MCF 10A (cell line): ENCODE measurements at regions of chr9 and their contacts with region 1.

Region 1: DNA sequence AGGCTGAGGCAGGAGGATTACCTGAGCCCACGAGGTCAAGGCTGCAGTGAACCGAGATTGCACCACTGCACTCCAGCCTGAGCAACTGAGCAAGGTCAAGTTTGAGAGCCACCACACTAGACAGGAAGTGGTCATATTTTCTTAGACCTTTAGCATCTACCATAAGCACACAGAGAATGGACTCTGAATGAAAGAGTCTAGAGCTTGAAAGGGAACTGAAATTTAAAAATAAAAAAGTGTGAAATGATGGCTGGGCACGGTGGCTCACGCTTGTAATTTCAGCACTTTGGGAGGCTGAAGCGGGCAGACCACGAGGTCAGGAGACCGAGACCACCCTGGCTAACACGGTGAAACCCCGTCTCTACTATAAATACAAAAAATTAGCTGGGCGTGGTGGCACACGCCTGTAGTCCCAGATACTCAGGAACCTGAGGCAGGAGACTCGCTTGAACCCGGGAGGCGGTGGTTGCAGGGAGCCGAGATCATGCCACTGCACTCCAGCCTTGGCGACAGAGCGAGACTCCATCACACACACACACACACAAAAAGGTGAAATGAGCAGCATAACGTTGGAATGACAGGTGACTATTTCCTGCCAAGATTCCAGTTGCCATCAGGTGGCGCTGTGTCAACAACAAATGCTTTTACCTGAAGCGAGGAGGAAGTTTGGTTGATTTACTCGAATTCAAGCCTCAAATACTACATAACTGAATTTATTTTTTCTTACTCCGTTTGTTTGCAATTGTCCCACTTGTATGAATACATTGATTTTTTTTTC is 21.3 kb upstream of the AK3 start:
- DNase-seq: peak; percentile 85
- H3K4me3 Mint-ChIP-seq: no peak overlapping the region
- H3K27ac Mint-ChIP-seq: no peak overlapping the region
- H3K4me1 Mint-ChIP-seq: no peaks in the 10 kb centered on the region
- H3K27me3 Mint-ChIP-seq: peaks cover 12% of the 10 kb centered on the region
- CTCF ChIP-seq: peak; percentile 76

Region 2: DNA sequence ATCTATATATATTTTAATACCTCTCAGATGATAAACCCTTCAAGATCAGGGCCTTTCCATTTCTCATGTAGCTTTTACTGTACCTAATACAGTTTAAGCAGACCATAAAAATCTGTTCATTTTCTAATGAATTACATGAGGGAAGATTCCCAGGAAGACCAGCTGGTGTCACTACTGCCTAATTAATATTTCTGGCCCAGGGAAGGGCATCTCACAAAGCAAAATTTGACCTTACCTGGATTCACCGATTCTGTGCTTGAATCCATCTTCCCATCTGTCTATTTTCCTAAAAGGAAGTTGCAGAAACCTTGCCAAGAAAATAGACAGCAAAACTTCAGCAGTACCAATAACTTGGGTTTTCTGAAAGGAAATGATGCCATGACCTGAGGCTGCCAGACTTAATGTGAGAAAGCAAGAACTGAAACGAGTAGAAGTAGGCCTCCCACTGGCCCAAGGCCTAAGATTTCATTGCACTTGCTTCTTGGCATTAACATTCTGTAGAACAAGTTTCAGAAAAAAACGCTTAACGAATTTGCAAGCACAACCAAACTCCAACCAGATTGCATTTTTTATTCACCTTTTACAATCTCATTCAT is 379.5 kb before region 1 on chr9:
- CTCF ChIA-PET with region 1: interaction called, 5 read pairs
- POLR2A ChIA-PET with region 1: no interaction called
- intact Hi-C with region 1: loop called (anchors 5 kb)
- DNase-seq: peak; percentile 53
- H3K4me3 Mint-ChIP-seq: no peak overlapping the region
- H3K27ac Mint-ChIP-seq: no peak overlapping the region
- H3K4me1 Mint-ChIP-seq: no peaks in the 10 kb centered on the region
- H3K27me3 Mint-ChIP-seq: no peaks in the 10 kb centered on the region
- CTCF ChIP-seq: peak; percentile 41

Region 3: DNA sequence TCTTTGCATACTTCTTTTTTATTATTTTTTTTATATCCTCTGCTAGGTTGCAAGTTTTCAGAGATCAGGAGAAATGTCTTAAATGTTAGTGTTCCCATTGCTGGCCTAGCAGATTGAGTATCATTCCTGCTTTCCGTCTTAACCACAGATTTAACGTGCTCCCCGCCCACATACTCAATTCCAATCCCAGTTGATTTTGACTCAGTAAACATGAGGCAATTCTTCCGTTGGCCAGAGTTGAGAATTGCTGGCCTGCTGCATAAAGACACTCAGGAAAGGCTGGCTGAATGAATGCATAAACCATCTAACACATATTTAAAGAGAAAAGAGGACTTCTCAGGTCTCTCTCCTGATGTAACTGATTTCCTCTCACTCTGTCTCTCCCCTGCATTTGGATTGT is 147.0 kb before region 1 on chr9:
- CTCF ChIA-PET with region 1: no interaction called
- POLR2A ChIA-PET with region 1: no interaction called
- intact Hi-C with region 1: no loop called
- DNase-seq: peak; percentile 45
- H3K4me3 Mint-ChIP-seq: no peak overlapping the region
- H3K27ac Mint-ChIP-seq: no peak overlapping the region
- H3K4me1 Mint-ChIP-seq: peaks cover 9% of the 10 kb centered on the region
- H3K27me3 Mint-ChIP-seq: no peaks in the 10 kb centered on the region
- CTCF ChIP-seq: no peak

Region 4: DNA sequence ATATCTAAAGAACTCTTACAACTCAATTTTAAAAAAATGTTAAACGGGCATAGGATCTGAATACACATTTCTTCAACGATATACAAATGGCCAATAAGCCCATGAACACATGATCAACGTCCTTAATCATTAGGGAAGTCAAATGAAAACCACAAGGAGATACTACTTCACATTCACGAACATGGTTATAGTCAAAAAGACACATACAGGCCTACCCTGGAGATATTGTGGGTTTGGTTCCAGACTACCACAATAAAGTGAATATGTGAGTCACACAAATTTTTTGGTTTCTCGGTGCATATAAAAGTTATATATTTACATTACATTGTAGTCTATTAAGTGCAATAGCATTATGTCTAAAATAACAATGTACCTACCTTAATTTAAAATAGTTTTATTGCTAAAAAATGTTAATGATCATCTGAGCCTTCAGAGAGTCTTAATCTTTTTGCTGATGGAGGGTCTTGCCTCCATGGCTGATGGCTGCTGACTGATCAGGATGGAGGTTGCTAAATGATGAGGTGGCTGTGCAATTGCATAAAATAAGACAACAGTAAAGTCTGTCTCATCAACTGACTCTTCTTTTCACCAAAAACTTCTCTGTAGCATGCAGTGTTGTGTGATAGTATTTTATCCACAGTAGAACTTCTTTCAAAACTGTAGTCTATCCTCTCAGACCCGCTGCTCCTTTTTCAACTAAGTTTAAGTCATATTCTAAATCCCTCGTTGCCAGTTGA is 36.4 kb before region 1 on chr9:
- CTCF ChIA-PET with region 1: no interaction called
- POLR2A ChIA-PET with region 1: no interaction called
- intact Hi-C with region 1: no loop called
- DNase-seq: no peak
- H3K4me3 Mint-ChIP-seq: no peak overlapping the region
- H3K27ac Mint-ChIP-seq: peak overlapping the region; percentile 7
- H3K4me1 Mint-ChIP-seq: peaks cover 6% of the 10 kb centered on the region
- H3K27me3 Mint-ChIP-seq: no peaks in the 10 kb centered on the region
- CTCF ChIP-seq: no peak

Region 5: GRCh38 chr9:4781408-4781807 is 19.1 kb after region 1 on chr9:
- CTCF ChIA-PET with region 1: interaction called, 25 read pairs
- POLR2A ChIA-PET with region 1: interaction called, 3 read pairs
- intact Hi-C with region 1: no loop called
- DNase-seq: no peak
- H3K4me3 Mint-ChIP-seq: no peak overlapping the region
- H3K27ac Mint-ChIP-seq: no peak overlapping the region
- H3K4me1 Mint-ChIP-seq: peaks cover 7% of the 10 kb centered on the region
- H3K27me3 Mint-ChIP-seq: no peaks in the 10 kb centered on the region
- CTCF ChIP-seq: no peak

Region 6: DNA sequence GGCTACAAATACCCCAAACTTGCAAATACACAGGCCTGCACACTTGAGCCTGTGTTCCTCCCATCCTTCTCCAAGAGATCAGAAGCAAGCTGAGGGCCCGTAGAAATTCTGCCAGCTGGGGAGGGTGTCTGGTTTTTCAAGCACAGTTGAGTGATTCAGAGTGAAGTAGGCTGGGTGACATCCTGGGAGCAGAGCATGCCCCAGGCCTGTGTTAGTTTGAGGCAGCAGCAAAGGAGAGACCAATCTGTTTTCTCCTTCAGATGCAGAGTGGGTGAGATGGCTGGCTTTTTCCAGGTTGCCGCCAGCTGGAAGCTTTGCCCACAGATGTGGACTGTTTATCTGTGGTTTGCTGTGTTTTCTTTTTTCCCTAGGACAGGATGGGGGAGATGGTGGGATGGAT is 93.5 kb after region 1 on chr9:
- CTCF ChIA-PET with region 1: interaction called, 10 read pairs
- POLR2A ChIA-PET with region 1: no interaction called
- intact Hi-C with region 1: no loop called
- DNase-seq: no peak
- H3K4me3 Mint-ChIP-seq: no peak overlapping the region
- H3K27ac Mint-ChIP-seq: no peak overlapping the region
- H3K4me1 Mint-ChIP-seq: peaks cover 16% of the 10 kb centered on the region
- H3K27me3 Mint-ChIP-seq: no peaks in the 10 kb centered on the region
- CTCF ChIP-seq: no peak

Region 7: DNA sequence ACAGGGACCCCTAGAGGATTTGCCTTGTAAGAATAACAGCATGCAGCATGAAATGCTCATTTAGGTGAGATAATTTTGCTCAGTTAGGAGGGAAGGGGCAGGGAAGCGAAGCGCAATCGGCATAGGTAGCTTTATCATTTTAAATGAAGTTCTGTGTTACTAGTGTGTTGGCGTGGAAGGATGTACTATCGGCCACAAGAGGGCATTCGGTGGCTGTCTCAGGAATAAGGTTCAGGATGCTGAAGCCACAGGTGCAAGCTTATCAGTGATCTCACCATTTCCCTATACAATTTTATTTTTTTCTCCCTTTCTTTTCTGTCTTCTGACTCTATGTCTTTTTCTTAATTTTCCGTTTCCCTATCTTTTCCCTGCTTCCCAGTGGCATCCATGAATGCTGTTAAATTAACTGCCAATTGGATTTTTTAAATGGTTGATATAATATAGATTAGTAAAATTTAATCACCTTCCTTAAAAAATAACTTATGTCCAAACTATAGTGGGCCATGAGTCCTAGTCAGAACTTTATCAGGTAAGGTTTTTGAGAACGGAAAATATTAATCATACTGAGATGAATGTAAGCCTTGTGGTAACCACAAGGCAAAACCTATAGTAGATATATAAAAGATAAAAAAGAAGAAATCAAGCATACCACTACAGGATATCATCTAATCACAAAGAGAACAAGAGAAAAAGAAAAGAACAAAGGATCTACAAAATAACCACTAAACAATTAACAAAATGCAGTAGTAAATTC is 424.3 kb after region 1 on chr9:
- CTCF ChIA-PET with region 1: no interaction called
- POLR2A ChIA-PET with region 1: no interaction called
- intact Hi-C with region 1: loop called (anchors 5 kb)
- DNase-seq: peak; percentile 75
- H3K4me3 Mint-ChIP-seq: no peak overlapping the region
- H3K27ac Mint-ChIP-seq: no peak overlapping the region
- H3K4me1 Mint-ChIP-seq: peaks cover 4% of the 10 kb centered on the region
- H3K27me3 Mint-ChIP-seq: peaks cover 26% of the 10 kb centered on the region
- CTCF ChIP-seq: peak; percentile 88

Region 8: DNA sequence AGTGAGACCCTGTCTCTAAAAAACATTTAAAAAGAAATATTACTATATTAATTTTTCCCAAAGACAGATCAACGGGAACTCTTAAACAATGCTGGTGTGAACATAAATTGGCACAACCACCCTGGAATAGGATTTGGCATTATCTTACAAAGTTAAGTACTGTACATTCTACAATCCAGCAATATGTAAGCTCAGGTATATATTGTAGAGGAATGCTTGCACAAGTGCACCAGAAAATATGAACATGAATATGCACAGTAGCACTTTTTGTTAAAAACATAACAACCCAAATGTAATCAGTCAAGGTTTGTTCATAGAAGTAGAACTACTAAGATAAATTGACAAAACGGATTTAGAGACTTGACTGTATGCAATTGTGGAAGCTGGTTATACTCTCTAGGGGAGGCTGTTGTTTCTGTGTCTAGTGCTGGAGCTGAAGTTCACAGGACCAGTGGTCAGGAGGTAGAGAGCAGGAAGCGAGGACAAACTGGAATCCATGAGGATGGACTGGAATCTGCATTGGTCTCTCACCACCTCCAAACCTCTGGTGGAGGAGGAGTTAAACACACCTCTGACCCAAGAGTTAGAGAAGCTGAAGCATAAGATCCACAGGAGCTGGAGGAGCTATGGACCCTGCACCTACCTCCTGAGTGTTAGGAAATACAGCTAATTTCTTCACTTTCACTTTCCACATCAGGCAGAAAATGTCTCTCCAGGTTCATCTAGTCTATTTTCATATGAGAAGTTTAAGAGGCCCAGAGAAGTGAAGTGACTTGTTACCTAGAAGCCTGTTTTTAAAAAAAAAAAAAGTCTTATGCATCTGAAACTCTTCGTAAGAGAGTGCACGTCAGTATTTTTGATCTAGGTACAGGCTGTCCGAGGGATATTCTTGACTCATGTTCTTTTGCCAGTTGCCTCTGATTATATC is 846.3 kb after region 1 on chr9:
- CTCF ChIA-PET with region 1: no interaction called
- POLR2A ChIA-PET with region 1: no interaction called
- intact Hi-C with region 1: loop called (anchors 5 kb)
- DNase-seq: peak; percentile 35
- H3K4me3 Mint-ChIP-seq: peak overlapping the region; percentile 57
- H3K27ac Mint-ChIP-seq: peak overlapping the region; percentile 47
- H3K4me1 Mint-ChIP-seq: no peaks in the 10 kb centered on the region
- H3K27me3 Mint-ChIP-seq: no peaks in the 10 kb centered on the region
- CTCF ChIP-seq: no peak